ENCODE measurements at regions of chr4 and their contacts with region 1.

Region 1: DNA sequence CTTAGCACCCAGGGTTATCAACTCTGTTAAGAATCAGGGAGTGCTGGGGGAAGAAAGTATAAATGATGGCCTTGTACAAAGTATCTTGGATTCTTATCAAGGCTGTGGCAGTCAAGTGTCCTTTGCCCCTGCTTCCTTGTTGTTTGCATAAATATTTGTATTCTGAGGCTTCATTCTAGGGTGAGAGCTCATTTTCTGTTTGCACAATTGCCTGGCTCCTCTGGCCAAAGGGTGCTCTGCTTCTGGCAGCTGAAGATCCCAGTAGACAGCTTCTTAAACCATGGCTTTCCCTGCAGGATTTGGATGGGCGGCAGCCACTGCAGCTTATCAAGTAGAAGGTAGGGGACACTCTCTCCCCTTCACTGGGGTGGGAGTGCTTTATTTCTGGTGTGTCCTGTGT is at the start of gene GBA3:
- DNase-seq: no peak
- H3K4me3 ChIP-seq: no peak within 1 kb of the TSS
- H3K27ac ChIP-seq: no peak within 1 kb of the TSS
- H3K4me1 ChIP-seq: no peaks in the 10 kb centered on the region
- H3K27me3 ChIP-seq: no peaks in the 10 kb centered on the region
- CTCF ChIP-seq: no peak
- POLR2A ChIP-seq: no peak
- total RNA-seq, gene GBA3: not detected

Region 2: DNA sequence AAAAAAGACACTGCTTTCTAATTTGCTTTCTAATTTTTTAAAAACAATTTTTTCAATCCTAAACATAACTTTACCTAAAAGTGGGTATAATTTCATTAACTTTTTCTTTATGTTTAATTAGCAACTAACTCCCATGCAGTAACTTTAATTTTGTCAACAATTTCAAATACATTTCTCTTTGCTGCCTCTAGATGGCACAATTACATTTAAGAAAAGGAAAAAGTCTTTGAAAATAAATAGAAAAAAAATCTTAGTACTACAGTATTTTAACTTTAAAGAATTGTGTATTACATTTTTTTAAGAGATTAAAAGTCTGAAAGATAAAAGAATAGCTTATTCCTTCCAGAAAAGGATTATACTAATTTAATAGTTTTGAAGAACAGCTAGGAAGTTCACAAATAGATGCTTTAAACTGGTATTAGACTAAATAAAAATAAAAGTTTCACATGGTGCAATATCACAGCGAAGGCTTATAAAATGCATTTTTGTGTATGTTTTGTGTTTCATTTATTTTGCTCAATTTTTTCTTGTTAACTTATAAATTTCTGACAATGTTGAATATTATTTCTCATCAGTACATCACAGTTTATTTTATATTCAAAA is 282.0 kb before region 1 on chr4:
- intact Hi-C with region 1: loop called (anchors 5 kb)
- DNase-seq: no peak
- H3K4me3 ChIP-seq: no peak overlapping the region
- H3K27ac ChIP-seq: no peak overlapping the region
- H3K4me1 ChIP-seq: no peaks in the 10 kb centered on the region
- H3K27me3 ChIP-seq: no peaks in the 10 kb centered on the region
- CTCF ChIP-seq: peak; percentile 7 to 45 (median 44)
- POLR2A ChIP-seq: no peak